ENCODE measurements at regions of chr3 and their contacts with region 1.

Region 1: GRCh38 chr3:178084938-178085816 is 451.1 kb upstream of the KCNMB2 start:
- DNase-seq: peak; percentile 9
- H3K4me3 Mint-ChIP-seq: no peak overlapping the region
- H3K27ac Mint-ChIP-seq: no peak overlapping the region
- H3K4me1 Mint-ChIP-seq: peaks cover 15% of the 10 kb centered on the region
- H3K27me3 Mint-ChIP-seq: no peaks in the 10 kb centered on the region

Region 2: GRCh38 chr3:177994976-177995375 is 90.2 kb before region 1 on chr3:
- intact Hi-C with region 1: loop called (anchors 2 kb)
- DNase-seq: no peak
- H3K4me3 Mint-ChIP-seq: no peak overlapping the region
- H3K27ac Mint-ChIP-seq: peak overlapping the region; percentile 75
- H3K4me1 Mint-ChIP-seq: peaks cover 21% of the 10 kb centered on the region
- H3K27me3 Mint-ChIP-seq: no peaks in the 10 kb centered on the region

Region 3: GRCh38 chr3:178868681-178869080 is 783.5 kb after region 1 on chr3:
- intact Hi-C with region 1: no loop called
- DNase-seq: no peak
- H3K4me3 Mint-ChIP-seq: no peak overlapping the region
- H3K27ac Mint-ChIP-seq: no peak overlapping the region
- H3K4me1 Mint-ChIP-seq: no peaks in the 10 kb centered on the region
- H3K27me3 Mint-ChIP-seq: no peaks in the 10 kb centered on the region